ENCODE measurements at regions of chr9 and their contacts with region 1.

Region 1: GRCh38 chr9:76658535-76659231 is 105.6 kb upstream of the PCA3 start:
- DNase-seq: peak in 1 of 5 donors; percentile 22
- H3K4me3 ChIP-seq: no peak overlapping the region
- H3K4me3 Mint-ChIP-seq: peak overlapping the region in 1 of 7 donors; percentile 7
- H3K27ac ChIP-seq: no peak overlapping the region
- H3K27ac Mint-ChIP-seq: peak overlapping the region in 2 of 8 donors; percentile 0 to 3
- H3K4me1 ChIP-seq: peaks cover 4% of the 10 kb centered on the region
- H3K4me1 Mint-ChIP-seq: peaks cover 38 to 60% (median 51%) of the 10 kb centered on the region in 3 donors
- H3K27me3 ChIP-seq: no peaks in the 10 kb centered on the region
- H3K27me3 Mint-ChIP-seq: no peaks in the 10 kb centered on the region

Region 2: GRCh38 chr9:76458903-76459690 is 199.6 kb before region 1 on chr9 and contains the start of gene GCNT1:
- CTCF ChIA-PET with region 1: interaction called, 38 read pairs
- POLR2A ChIA-PET with region 1: no interaction called
- DNase-seq: peak; percentile 85 to 91 (median 86)
- H3K4me3 ChIP-seq: peak within 1 kb of the TSS; percentile 83
- H3K4me3 Mint-ChIP-seq: peak within 1 kb of the TSS; percentile 85 to 98 (median 95)
- H3K27ac ChIP-seq: no peak within 1 kb of the TSS
- H3K27ac Mint-ChIP-seq: peak within 1 kb of the TSS in 7 of 8 donors; percentile 52 to 95 (median 84)
- H3K4me1 ChIP-seq: peaks cover 12% of the 10 kb centered on the region
- H3K4me1 Mint-ChIP-seq: peaks cover 24 to 40% (median 35%) of the 10 kb centered on the region in 3 donors
- H3K27me3 ChIP-seq: no peaks in the 10 kb centered on the region
- H3K27me3 Mint-ChIP-seq: peaks cover 0 to 3% of the 10 kb centered on the region in 2 donors
- total RNA-seq, gene GCNT1: 14.8 to 20.9 TPM

Region 3: GRCh38 chr9:76787677-76788076 is 129.0 kb after region 1 on chr9:
- CTCF ChIA-PET with region 1: no interaction called
- POLR2A ChIA-PET with region 1: no interaction called
- DNase-seq: no peak
- H3K4me3 ChIP-seq: no peak overlapping the region
- H3K4me3 Mint-ChIP-seq: no peak overlapping the region
- H3K27ac ChIP-seq: no peak overlapping the region
- H3K27ac Mint-ChIP-seq: no peak overlapping the region
- H3K4me1 ChIP-seq: no peaks in the 10 kb centered on the region
- H3K4me1 Mint-ChIP-seq: no peaks in the 10 kb centered on the region
- H3K27me3 ChIP-seq: no peaks in the 10 kb centered on the region
- H3K27me3 Mint-ChIP-seq: peaks cover 4 to 17% of the 10 kb centered on the region in 2 donors

Measured in CD8-positive, alpha-beta memory T cell (primary cell).